ENCODE measurements at regions of chr2 and their contacts with region 1.

Region 1: DNA sequence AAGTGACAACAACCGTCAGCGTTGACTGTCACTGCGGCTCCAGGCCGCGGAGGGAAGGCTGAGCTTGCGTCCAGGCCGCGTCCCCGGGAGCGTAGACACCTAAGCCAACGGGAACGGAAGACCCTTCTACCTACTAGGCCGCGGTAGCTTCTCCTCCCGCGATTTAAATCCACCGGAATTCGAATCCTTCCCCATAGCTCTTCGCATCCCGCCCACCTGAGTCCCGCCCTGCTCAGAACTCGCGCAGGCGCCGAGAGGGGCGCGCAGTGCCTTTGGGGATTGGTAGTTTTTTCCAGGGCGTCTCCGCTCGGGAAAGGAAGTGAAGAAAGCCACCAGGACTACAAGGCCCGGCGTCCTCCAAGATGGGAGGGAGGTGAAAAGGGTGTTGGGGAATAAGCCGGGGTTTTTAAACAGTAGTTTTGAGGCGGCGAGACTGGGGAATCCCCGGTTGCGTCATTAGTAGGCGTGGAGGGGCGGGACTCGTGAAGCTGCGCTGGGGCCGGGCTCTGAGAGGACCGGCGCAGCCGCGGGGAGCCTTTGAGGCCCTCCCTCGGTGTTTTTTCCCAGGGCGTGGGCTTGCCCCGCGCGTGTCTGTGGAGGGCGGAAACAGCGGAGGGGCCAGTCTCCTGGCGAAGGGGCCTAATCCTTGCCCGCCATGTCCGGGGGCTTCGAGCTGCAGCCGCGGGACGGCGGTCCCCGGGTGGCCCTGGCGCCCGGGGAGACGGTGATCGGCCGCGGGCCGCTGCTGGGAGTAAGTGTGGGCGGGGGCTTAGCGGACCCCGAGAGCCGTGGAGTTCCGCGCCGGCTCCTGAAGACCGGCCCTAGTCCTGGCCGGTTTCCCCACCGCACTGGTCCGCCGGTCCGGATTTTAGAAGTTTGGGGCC is at the starts of genes APLF and FBXO48:
- DNase-seq: peak; percentile 99
- total RNA-seq, gene APLF: 6.5 TPM
- total RNA-seq, gene FBXO48: 0.92 TPM

Region 2: DNA sequence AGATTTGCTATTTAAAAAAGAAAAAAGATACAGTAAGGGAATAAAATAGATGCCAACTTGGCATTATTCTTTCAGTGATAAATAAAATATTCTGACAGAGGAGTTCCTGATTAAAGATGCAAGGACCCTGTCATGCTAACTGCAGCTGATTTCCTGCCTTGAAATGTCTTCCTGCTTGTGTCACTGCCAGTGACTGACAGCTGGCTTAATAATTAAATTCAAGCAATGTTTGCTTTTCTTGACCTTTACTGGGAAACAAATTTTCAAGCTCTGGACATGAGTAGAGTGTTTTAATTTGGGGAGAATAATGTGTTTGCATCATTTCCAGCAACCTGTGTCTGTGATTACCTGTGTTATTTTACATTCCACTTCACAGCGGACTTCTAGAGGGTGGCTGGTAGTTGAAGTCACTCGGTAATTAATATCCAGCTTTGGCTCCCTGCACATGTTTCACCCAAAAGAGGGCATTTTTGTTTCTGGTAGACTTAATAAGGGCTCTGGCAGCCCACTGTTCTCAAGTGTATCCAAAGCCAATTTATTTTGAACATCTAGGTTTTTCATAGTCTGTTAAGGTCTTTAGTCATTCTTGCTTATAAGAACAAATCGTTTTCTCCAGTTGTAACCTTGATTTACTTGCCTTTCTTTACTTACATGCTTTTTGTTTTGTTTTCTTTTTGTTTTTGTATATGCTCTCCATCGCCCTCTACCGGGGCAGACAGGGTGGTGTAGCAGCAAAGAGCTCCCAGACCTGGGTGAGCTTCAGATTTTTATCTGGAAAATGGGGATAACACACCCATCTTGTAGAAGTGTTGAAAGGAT is 127.6 kb after region 1 on chr2:
- intact Hi-C with region 1: loop called (anchors 10 kb)
- DNase-seq: no peak

Region 3: DNA sequence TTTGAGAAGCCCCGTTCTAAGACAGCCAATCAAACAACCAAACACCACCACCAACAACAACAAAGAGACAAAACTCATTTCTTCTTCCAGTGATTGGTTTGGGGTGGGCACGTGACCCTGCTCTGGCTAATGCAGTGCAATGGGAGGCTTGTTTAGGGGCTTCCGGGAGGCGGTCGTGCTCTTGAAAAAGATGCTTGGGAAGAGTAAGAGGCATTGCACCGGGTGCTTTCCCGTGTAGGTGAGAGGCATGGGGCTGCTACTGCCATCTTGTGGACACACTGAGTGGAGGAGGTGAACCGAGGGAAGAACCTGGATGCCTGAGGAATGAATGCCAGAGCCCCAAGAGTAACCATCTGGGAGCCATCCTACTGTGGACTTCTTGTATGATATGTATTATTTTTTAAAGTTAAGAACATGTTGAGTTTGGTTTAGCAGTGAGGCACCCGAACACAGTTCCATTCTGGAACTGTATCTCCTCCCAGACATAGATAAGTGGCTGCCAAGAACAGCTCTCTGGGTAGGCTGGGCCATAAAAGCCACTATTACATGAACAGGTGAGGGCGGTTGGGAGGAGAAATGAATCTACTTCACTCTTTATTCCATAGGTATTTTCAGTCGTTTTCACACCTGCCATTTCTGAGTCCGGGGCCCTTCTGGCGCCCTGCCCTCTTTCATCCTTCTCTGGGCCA is 248.2 kb after region 1 on chr2:
- intact Hi-C with region 1: loop called (anchors 10 kb)
- DNase-seq: peak; percentile 81

Region 4: GRCh38 chr2:68751397-68752339 is 284.3 kb after region 1 on chr2:
- intact Hi-C with region 1: loop called (anchors 10 kb)
- DNase-seq: peak; percentile 96

Region 5: GRCh38 chr2:68828887-68829708 is 361.8 kb after region 1 on chr2:
- intact Hi-C with region 1: loop called (anchors 10 kb)
- DNase-seq: peak; percentile 97

Region 6: GRCh38 chr2:68921646-68922045 is 454.3 kb after region 1 on chr2:
- intact Hi-C with region 1: loop called (anchors 5 kb)
- DNase-seq: no peak

Measured in cardiac septum (tissue), 1 donor.